ENCODE measurements at regions of chr9 and their contacts with region 1.

Region 1: GRCh38 chr9:28720746-28721145 is 1147.5 kb upstream of the C9orf72 start:
- DNase-seq: no peak
- ATAC-seq: no peak
- H3K4me3 ChIP-seq: no peak overlapping the region
- H3K4me3 Mint-ChIP-seq: no peak overlapping the region
- H3K27ac ChIP-seq: no peak overlapping the region
- H3K27ac Mint-ChIP-seq: no peak overlapping the region
- H3K4me1 ChIP-seq: no peaks in the 10 kb centered on the region
- H3K4me1 Mint-ChIP-seq: no peaks in the 10 kb centered on the region
- H3K27me3 ChIP-seq: no peaks in the 10 kb centered on the region
- H3K27me3 Mint-ChIP-seq: no peaks in the 10 kb centered on the region
- CTCF ChIP-seq: no peak

Region 2: GRCh38 chr9:28758341-28758740 is 37.6 kb after region 1 on chr9:
- CTCF ChIA-PET with region 1: no interaction called
- POLR2A ChIA-PET with region 1: no interaction called
- intact Hi-C with region 1: no loop called
- DNase-seq: no peak
- ATAC-seq: no peak
- H3K4me3 ChIP-seq: no peak overlapping the region
- H3K4me3 Mint-ChIP-seq: no peak overlapping the region
- H3K27ac ChIP-seq: no peak overlapping the region
- H3K27ac Mint-ChIP-seq: no peak overlapping the region
- H3K4me1 ChIP-seq: no peaks in the 10 kb centered on the region
- H3K4me1 Mint-ChIP-seq: no peaks in the 10 kb centered on the region
- H3K27me3 ChIP-seq: no peaks in the 10 kb centered on the region
- H3K27me3 Mint-ChIP-seq: no peaks in the 10 kb centered on the region
- CTCF ChIP-seq: no peak

Region 3: DNA sequence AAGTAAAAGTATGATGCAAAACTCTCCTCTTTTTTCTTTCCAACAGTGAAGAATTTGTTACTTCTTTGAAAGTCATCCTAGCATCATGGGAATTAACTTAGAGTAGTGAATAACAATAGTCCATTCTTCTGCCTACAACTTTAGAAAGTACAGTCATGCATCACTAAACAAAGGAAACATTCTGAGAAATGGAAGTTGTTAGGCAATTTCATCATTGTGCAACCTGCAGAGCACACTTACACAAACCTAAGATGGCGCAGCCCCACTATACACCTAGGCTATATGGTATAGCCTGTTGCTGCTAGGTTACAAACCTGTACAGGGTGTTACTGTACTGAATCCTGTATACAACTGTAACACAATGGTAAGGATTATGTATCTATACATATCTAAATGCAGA is 61.9 kb after region 1 on chr9:
- CTCF ChIA-PET with region 1: no interaction called
- POLR2A ChIA-PET with region 1: no interaction called
- intact Hi-C with region 1: loop called (anchors 10 kb)
- DNase-seq: no peak
- ATAC-seq: no peak
- H3K4me3 ChIP-seq: no peak overlapping the region
- H3K4me3 Mint-ChIP-seq: no peak overlapping the region
- H3K27ac ChIP-seq: no peak overlapping the region
- H3K27ac Mint-ChIP-seq: no peak overlapping the region
- H3K4me1 ChIP-seq: no peaks in the 10 kb centered on the region
- H3K4me1 Mint-ChIP-seq: no peaks in the 10 kb centered on the region
- H3K27me3 ChIP-seq: no peaks in the 10 kb centered on the region
- H3K27me3 Mint-ChIP-seq: no peaks in the 10 kb centered on the region
- CTCF ChIP-seq: no peak

Measured in B cell (primary cell).